ENCODE measurements at regions of chr3 and their contacts with region 1.

Region 1: GRCh38 chr3:168095611-168096209 is at the start of gene GOLIM4:
- DNase-seq: peak in 4 of 9 donors; percentile 2 to 77 (median 22)
- ATAC-seq: peak; percentile 86
- H3K4me3 ChIP-seq: peak within 1 kb of the TSS; percentile 37
- H3K4me3 Mint-ChIP-seq: peak within 1 kb of the TSS; percentile 72 to 96 (median 86)
- H3K27ac ChIP-seq: peak within 1 kb of the TSS; percentile 14
- H3K27ac Mint-ChIP-seq: peak within 1 kb of the TSS in 2 of 9 donors; percentile 51 to 83
- H3K4me1 ChIP-seq: no peaks in the 10 kb centered on the region
- H3K4me1 Mint-ChIP-seq: peaks cover 4 to 15% (median 12%) of the 10 kb centered on the region in 7 donors
- H3K27me3 ChIP-seq: no peaks in the 10 kb centered on the region
- H3K27me3 Mint-ChIP-seq: peaks cover 47 to 60% (median 51%) of the 10 kb centered on the region in 5 donors
- total RNA-seq, gene GOLIM4: 0.43 to 5.5 (median 1.0) TPM

Region 2: GRCh38 chr3:167820102-167820865 is 275.4 kb before region 1 on chr3:
- CTCF ChIA-PET with region 1: no interaction called
- POLR2A ChIA-PET with region 1: no interaction called
- intact Hi-C with region 1: no loop called
- DNase-seq: no peak
- ATAC-seq: no peak
- H3K4me3 ChIP-seq: no peak overlapping the region
- H3K4me3 Mint-ChIP-seq: no peak overlapping the region
- H3K27ac ChIP-seq: no peak overlapping the region
- H3K27ac Mint-ChIP-seq: no peak overlapping the region
- H3K4me1 ChIP-seq: no peaks in the 10 kb centered on the region
- H3K4me1 Mint-ChIP-seq: no peaks in the 10 kb centered on the region
- H3K27me3 ChIP-seq: no peaks in the 10 kb centered on the region
- H3K27me3 Mint-ChIP-seq: no peaks in the 10 kb centered on the region

Region 3: GRCh38 chr3:168061332-168061996 is 34.2 kb before region 1 on chr3:
- CTCF ChIA-PET with region 1: no interaction called
- POLR2A ChIA-PET with region 1: no interaction called
- intact Hi-C with region 1: loop called in 1 of 2 experiments (anchors 5 kb)
- DNase-seq: no peak
- ATAC-seq: peak; percentile 49
- H3K4me3 ChIP-seq: no peak overlapping the region
- H3K4me3 Mint-ChIP-seq: peak overlapping the region in 1 of 10 donors; percentile 8
- H3K27ac ChIP-seq: no peak overlapping the region
- H3K27ac Mint-ChIP-seq: peak overlapping the region in 1 of 9 donors; percentile 4
- H3K4me1 ChIP-seq: no peaks in the 10 kb centered on the region
- H3K4me1 Mint-ChIP-seq: peaks cover 0 to 12% (median 0%) of the 10 kb centered on the region in 7 donors
- H3K27me3 ChIP-seq: no peaks in the 10 kb centered on the region
- H3K27me3 Mint-ChIP-seq: peaks cover 0 to 9% (median 6%) of the 10 kb centered on the region in 5 donors

Region 4: GRCh38 chr3:168165390-168166269 is 69.9 kb after region 1 on chr3:
- CTCF ChIA-PET with region 1: no interaction called
- POLR2A ChIA-PET with region 1: no interaction called
- intact Hi-C with region 1: loop called in 1 of 2 experiments (anchors 5 kb)
- DNase-seq: peak in 2 of 9 donors; percentile 0 to 8
- ATAC-seq: no peak
- H3K4me3 ChIP-seq: no peak overlapping the region
- H3K4me3 Mint-ChIP-seq: peak overlapping the region in 3 of 10 donors; percentile 21 to 53 (median 24)
- H3K27ac ChIP-seq: no peak overlapping the region
- H3K27ac Mint-ChIP-seq: no peak overlapping the region
- H3K4me1 ChIP-seq: no peaks in the 10 kb centered on the region
- H3K4me1 Mint-ChIP-seq: peaks cover 0 to 4% (median 0%) of the 10 kb centered on the region in 7 donors
- H3K27me3 ChIP-seq: no peaks in the 10 kb centered on the region
- H3K27me3 Mint-ChIP-seq: peaks cover 0 to 1% (median 0%) of the 10 kb centered on the region in 5 donors

Measured in naive thymus-derived CD4-positive, alpha-beta T cell (primary cell).